ENCODE measurements at regions of chr4 and their contacts with region 1.

Region 1: DNA sequence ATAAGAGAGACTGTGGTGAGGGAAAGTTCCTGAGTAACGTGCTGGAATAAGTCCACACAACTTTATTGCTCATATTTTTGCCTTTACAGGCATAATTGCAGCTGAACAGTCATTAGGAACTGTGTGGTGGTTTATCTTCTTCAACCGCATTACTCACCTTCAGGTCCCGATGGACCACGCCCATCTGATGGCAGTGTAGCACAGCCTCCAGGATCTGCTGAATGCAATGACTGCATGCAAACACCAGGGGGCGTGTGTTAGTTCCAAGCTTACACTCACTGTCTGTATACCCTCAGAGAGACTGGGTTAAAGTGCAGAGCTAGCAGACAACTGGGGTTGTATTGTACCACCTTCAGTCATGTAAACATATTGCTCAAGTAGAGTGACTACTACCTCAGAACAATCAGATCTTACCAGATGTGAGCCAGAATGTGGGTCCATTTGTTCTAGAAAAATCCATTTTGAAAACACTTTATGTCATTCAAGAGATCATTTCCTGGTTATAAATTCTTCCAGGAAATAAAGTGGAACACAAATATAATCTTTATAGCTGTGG is 214.0 kb downstream of the CAMK2D start:
- DNase-seq: peak; percentile 88
- ATAC-seq: peak; percentile 99 to 100
- H3K4me3 ChIP-seq: no peak overlapping the region
- H3K27ac ChIP-seq: peak overlapping the region; percentile 5
- H3K4me1 ChIP-seq: peaks cover 15% of the 10 kb centered on the region
- H3K27me3 ChIP-seq: no peaks in the 10 kb centered on the region
- CTCF ChIP-seq: peak; percentile 98

Region 2: DNA sequence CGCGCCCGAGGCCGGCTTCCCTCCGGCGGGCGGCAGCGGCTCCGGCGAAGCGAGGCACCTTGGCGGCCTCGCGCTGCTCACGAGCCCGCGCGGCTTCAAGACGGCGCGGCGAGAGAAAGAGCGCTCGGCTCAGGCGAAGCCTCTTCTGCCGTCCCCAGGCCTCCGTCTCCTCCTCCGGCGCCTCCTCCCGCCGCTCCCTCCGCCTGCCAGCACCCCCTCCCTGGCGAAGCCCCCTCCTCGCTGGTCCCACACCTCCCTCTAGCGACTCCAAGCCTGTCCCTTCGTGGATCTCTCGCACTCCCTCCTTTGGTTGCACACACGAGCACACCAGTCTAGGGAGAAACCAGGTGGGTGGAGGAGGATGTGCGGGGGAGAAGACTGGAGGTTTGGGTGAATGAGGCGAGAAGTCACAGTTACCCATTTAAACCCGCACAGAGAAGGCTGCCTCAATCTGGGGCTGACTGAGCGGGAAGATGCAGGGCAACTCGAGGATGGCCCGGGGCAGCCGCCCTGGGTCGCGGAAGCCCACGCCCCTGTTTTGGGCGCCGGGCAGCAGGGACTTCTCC is 214.1 kb after region 1 on chr4 and contains the start of gene CAMK2D:
- intact Hi-C with region 1: loop called (anchors 5 kb)
- DNase-seq: peak; percentile 86
- ATAC-seq: peak; percentile 84 to 86
- H3K4me3 ChIP-seq: peak within 1 kb of the TSS; percentile 81
- H3K27ac ChIP-seq: peak within 1 kb of the TSS; percentile 96
- H3K4me1 ChIP-seq: peaks cover 29% of the 10 kb centered on the region
- H3K27me3 ChIP-seq: no peaks in the 10 kb centered on the region
- CTCF ChIP-seq: peak; percentile 38
- total RNA-seq, gene CAMK2D: 40.7 TPM

Region 3: GRCh38 chr4:113809311-113809710 is 261.7 kb after region 1 on chr4:
- intact Hi-C with region 1: no loop called
- DNase-seq: peak; percentile 60
- ATAC-seq: peak; percentile 84 to 85
- H3K4me3 ChIP-seq: no peak overlapping the region
- H3K27ac ChIP-seq: no peak overlapping the region
- H3K4me1 ChIP-seq: no peaks in the 10 kb centered on the region
- H3K27me3 ChIP-seq: no peaks in the 10 kb centered on the region
- CTCF ChIP-seq: no peak